ENCODE measurements at regions of chr10 and their contacts with region 1.

Region 1: GRCh38 chr10:61943674-61944410 is 42.3 kb downstream of the ARID5B start:
- DNase-seq: peak; percentile 23
- H3K4me3 Mint-ChIP-seq: peak overlapping the region; percentile 50
- H3K27ac Mint-ChIP-seq: peak overlapping the region; percentile 94
- H3K4me1 Mint-ChIP-seq: peaks cover 51% of the 10 kb centered on the region
- H3K27me3 Mint-ChIP-seq: no peaks in the 10 kb centered on the region
- CTCF ChIP-seq: no peak

Region 2: DNA sequence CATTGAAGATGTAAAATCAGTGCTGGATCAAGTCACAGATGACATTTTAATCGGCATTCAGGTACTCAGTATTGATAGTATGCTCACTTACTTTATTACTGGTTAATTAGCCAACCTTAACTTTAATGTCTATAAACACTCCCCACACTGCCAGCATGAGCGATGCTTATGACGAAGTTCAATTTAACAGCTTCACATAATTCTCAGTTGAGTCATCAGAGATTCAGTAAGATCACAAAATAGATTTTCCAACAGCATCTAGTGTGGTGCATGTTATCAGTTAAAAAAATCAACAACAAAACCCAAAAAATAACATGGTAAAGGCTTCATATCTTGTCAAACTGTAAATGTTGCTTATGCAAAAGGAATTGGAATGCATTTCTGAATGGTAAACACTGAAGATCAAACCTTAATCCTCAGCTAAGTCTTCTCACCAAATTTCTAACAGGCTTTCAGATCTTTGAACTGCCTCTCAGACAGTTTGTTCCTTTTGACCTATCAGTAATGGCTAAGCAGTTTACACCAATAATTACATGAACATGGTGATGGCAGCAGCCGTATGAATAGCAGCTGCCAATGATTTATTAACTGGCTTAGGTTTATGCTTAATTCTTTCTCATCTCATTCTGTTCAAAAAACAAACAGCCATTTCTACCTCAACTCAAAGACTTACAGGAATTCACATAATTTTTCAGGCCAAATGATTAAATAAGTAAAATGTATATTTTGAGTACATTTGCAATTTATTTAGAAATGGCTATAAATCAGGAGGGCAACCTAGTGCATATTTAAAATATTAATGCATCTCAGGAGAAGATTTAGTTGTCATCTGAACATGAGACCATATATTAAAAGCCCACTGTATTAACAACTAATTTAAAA is 182.7 kb before region 1 on chr10:
- CTCF ChIA-PET with region 1: no interaction called
- intact Hi-C with region 1: loop called (anchors 5 kb)
- DNase-seq: no peak
- H3K4me3 Mint-ChIP-seq: peak overlapping the region; percentile 57
- H3K27ac Mint-ChIP-seq: peak overlapping the region; percentile 95
- H3K4me1 Mint-ChIP-seq: peaks cover 56% of the 10 kb centered on the region
- H3K27me3 Mint-ChIP-seq: no peaks in the 10 kb centered on the region
- CTCF ChIP-seq: no peak

Region 3: GRCh38 chr10:61896854-61897661 is 46.8 kb before region 1 on chr10:
- CTCF ChIA-PET with region 1: interaction called, 10 read pairs
- intact Hi-C with region 1: no loop called
- DNase-seq: peak; percentile 71
- H3K4me3 Mint-ChIP-seq: peak overlapping the region; percentile 42
- H3K27ac Mint-ChIP-seq: no peak overlapping the region
- H3K4me1 Mint-ChIP-seq: peaks cover 37% of the 10 kb centered on the region
- H3K27me3 Mint-ChIP-seq: no peaks in the 10 kb centered on the region
- CTCF ChIP-seq: peak; percentile 75

Region 4: DNA sequence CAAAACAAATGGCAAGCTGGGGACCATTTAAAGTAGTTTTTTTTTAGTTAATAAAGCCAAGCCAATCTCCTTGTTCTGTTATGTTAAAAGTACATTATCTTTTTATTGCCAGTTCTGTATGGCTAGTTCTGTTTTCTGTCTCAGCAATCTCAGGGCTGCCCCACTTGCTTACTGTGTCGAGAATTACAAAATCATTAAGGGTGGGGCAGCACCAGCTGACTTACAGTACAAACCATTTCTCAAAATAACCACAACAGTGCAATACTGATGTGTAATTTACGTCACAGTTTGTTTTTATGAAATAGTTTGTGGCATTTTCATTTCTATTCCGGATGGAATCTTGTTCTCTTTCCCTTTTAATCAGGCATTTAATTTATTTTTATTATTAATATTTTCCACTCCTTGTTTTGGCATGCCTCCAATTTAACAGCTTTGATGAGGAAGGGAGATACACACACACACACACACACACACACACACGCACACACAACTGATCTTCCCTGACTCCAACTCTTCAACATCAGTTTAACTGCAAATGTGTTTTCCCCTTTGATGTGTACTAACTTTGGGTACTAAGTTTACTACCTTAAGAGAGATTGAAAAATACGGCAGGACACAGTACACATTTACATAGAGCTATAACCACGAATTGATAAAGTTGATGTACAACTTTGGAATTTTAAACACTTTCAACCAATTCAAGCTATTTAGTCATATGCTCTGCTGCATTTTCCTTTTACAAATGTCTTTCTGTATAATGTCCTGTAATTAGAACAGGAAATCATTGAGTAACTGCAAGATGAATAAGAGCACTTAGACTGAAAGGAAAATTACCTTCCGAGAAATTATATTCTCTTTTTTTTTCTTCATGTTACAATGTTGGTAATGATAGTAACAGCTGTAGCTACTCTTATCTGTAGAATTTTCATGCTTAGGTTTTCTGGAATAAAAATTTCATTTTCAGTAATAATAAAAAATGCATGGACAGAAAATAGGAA is 49.1 kb after region 1 on chr10:
- CTCF ChIA-PET with region 1: no interaction called
- intact Hi-C with region 1: loop called (anchors 5 kb)
- DNase-seq: peak; percentile 44
- H3K4me3 Mint-ChIP-seq: peak overlapping the region; percentile 46
- H3K27ac Mint-ChIP-seq: peak overlapping the region; percentile 60
- H3K4me1 Mint-ChIP-seq: peaks cover 41% of the 10 kb centered on the region
- H3K27me3 Mint-ChIP-seq: no peaks in the 10 kb centered on the region
- CTCF ChIP-seq: no peak

Region 5: DNA sequence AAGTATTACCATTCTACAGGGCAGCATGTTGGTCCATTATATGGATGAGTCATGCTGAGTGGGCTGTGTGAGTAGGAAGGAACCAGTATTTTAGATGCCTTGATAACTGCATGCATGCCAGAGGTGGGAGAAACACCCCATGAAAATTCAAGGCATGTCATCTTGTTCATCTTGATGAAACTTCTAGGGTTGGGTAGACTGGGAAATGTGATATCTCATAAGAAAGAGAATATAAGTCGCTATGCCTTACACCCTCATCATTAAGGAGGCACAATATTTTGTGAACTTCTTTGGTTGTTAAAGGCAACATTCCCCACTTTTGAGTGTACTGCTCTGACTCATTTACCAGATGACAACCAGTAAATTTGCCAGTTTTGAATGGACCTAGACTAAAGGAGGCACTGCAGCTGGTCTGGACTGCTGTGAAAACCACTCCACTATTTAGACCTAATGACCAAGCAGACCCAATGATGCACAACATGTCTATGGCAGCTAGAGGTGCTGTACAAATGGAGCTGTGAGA is 478.3 kb after region 1 on chr10:
- CTCF ChIA-PET with region 1: no interaction called
- intact Hi-C with region 1: no loop called
- DNase-seq: no peak
- H3K4me3 Mint-ChIP-seq: no peak overlapping the region
- H3K27ac Mint-ChIP-seq: no peak overlapping the region
- H3K4me1 Mint-ChIP-seq: peaks cover 23% of the 10 kb centered on the region
- H3K27me3 Mint-ChIP-seq: no peaks in the 10 kb centered on the region
- CTCF ChIP-seq: no peak